ENCODE measurements at regions of chr16 and their contacts with region 1.

Region 1: GRCh38 chr16:3158471-3159314 is 23.9 kb downstream of the ZNF213 start:
- DNase-seq: peak; percentile 83
- ATAC-seq: peak; percentile 68
- H3K4me3 ChIP-seq: peak overlapping the region; percentile 87
- H3K27ac ChIP-seq: peak overlapping the region; percentile 80
- H3K4me1 ChIP-seq: no peaks in the 10 kb centered on the region
- H3K27me3 ChIP-seq: no peaks in the 10 kb centered on the region
- CTCF ChIP-seq: no peak

Region 2: GRCh38 chr16:3274490-3274889 is 115.8 kb after region 1 on chr16:
- CTCF ChIA-PET with region 1: no interaction called
- POLR2A ChIA-PET with region 1: interaction called, 13 read pairs
- intact Hi-C with region 1: no loop called
- DNase-seq: peak; percentile 2
- ATAC-seq: no peak; the same call in 1 of the 2 replicates
- H3K4me3 ChIP-seq: no peak overlapping the region
- H3K27ac ChIP-seq: no peak overlapping the region
- H3K4me1 ChIP-seq: no peaks in the 10 kb centered on the region
- H3K27me3 ChIP-seq: no peaks in the 10 kb centered on the region
- CTCF ChIP-seq: no peak

Region 3: DNA sequence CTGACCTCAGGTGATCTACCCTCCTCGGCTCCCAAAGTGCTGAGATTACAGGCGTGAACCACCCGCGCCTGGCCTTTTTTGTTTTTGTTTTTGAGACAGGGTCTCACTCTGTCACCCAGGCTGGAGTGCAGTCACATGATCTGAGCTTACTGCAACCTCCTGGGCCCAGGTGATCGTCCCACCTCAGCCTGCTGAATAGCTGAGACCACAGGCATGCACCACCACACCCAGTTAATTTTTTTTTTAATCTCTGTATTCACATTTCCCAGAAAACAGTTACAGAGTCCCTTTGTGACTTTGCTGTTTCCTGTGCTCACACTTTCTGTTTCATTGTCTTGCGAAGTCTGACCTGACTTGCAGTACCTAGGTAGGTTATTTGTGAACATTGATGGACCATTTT is 344.8 kb after region 1 on chr16:
- CTCF ChIA-PET with region 1: no interaction called
- POLR2A ChIA-PET with region 1: no interaction called
- intact Hi-C with region 1: loop called (anchors 2 kb)
- DNase-seq: no peak
- ATAC-seq: no peak
- H3K4me3 ChIP-seq: no peak overlapping the region
- H3K27ac ChIP-seq: no peak overlapping the region
- H3K4me1 ChIP-seq: peaks cover 4% of the 10 kb centered on the region; the same call in 1 of the 2 replicates
- H3K27me3 ChIP-seq: no peaks in the 10 kb centered on the region
- CTCF ChIP-seq: no peak